ENCODE measurements at regions of chr15 and their contacts with region 1.

Region 1: DNA sequence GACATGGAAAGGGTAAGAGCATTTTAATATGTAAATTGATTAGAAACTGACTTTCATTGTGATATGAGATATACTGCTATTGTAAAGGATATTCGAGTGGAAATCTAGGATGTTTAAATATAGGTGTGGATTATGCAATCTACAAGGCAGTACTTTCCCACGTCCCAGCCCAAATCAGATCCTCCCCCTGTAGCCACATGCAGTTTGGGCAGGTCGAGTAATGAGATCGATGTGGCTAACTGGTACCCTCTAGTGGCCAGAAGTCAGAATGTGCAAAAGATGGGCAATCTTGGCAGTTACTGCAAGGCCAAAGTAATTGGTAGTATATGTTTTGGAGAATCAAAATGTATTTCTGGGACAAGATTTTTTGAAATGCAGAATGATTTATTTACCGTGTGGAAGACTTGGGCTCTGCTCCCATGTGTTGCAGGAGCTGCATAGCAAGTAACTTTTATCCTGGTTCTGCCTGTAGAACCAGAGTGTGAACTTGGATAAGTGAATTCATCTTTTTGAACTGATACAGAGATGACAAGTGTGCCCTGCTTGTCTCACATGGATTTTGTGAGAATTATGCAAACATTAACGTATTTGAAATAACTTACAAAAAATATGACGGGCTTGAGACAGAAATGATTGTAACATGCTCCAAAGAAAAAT is 94.5 kb upstream of the ADAMTSL3 start:
- DNase-seq: peak; percentile 71
- H3K4me3 ChIP-seq: no peak overlapping the region
- H3K27ac ChIP-seq: no peak overlapping the region
- H3K4me1 ChIP-seq: peaks cover 6% of the 10 kb centered on the region
- H3K27me3 ChIP-seq: no peaks in the 10 kb centered on the region
- CTCF ChIP-seq: peak; percentile 86 to 89

Region 2: DNA sequence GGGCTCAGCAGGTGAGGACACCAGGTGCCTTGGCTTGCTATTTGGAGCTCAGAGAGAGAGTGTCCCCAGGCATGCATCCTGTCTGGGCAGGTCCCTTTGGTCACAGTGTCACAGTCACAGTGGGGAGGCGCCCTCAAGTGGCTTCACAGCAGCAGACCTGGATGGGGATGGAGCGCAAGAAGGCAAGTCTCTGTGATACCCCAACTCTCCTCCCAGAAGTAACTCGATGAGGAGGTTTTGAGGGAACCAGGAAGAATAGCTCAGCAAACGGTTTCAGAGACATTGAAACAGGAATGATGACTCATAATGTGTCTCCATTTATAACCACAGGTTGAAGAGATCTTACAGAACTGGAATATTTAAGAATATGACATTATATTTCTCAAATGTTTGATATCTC is 178.8 kb before region 1 on chr15:
- CTCF ChIA-PET with region 1: no interaction called
- dilution Hi-C with region 1: no loop called
- in situ Hi-C with region 1: no loop called
- intact Hi-C with region 1: loop called (anchors 5 kb)
- DNase-seq: peak; percentile 84
- H3K4me3 ChIP-seq: no peak overlapping the region
- H3K27ac ChIP-seq: peak overlapping the region; percentile 97
- H3K4me1 ChIP-seq: peaks cover 45% of the 10 kb centered on the region
- H3K27me3 ChIP-seq: no peaks in the 10 kb centered on the region
- CTCF ChIP-seq: peak; percentile 43 to 75

Region 3: GRCh38 chr15:83436458-83437158 is 122.8 kb before region 1 on chr15:
- CTCF ChIA-PET with region 1: interaction called, 3 read pairs
- dilution Hi-C with region 1: no loop called
- in situ Hi-C with region 1: loop called (anchors 5 kb)
- intact Hi-C with region 1: loop called (anchors 1 kb)
- DNase-seq: peak; percentile 61
- H3K4me3 ChIP-seq: no peak overlapping the region
- H3K27ac ChIP-seq: no peak overlapping the region
- H3K4me1 ChIP-seq: no peaks in the 10 kb centered on the region
- H3K27me3 ChIP-seq: no peaks in the 10 kb centered on the region
- CTCF ChIP-seq: peak; percentile 64 to 70

Region 4: DNA sequence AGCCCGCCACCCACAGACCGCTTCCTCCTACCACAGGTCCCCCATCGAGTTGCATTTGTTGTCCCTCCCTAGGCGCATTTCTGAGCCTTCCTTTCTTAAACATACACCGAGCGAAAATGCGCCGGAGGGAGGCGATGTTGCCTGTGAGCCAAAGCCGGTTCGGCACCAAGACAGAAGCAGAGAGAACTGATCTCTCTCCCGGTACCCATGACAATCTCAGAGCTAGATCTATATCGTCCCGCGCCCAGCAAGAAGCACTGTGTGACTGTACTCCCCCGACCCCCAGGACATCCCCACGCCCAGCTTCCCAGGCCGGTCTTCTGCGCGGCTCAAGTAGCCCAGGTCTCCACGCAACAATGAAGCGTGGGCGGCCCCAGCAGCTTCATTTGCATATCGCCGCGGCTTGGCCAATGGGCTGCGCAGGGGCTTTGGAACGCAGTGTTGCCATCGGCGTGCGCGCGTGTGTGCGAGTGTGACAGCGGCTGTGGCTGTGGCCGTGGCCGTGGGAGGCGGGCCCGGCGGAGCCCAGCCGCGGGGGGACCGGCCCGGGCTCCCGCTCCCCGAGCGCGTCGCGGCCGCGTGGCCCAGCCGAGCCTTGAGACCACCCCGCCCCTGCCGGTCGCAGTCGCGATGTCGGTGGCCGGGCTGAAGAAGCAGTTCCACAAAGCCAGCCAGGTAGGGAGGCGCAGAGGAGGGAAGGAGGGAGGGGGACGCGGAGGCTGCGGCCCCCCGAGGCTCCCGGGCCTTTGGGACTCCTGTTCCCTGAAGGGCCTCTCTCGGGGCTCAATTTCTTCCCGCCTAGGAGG is 112.3 kb before region 1 on chr15 and contains the start of gene SH3GL3:
- CTCF ChIA-PET with region 1: no interaction called
- dilution Hi-C with region 1: no loop called
- in situ Hi-C with region 1: no loop called
- intact Hi-C with region 1: loop called (anchors 1 kb)
- DNase-seq: peak; percentile 79
- H3K4me3 ChIP-seq: peak within 1 kb of the TSS; percentile 58 to 65 (median 63)
- H3K27ac ChIP-seq: no peak within 1 kb of the TSS
- H3K4me1 ChIP-seq: peaks cover 9% of the 10 kb centered on the region
- H3K27me3 ChIP-seq: no peaks in the 10 kb centered on the region
- CTCF ChIP-seq: peak; percentile 24 to 62
- total RNA-seq, gene SH3GL3: 0.40 TPM in 1 of 2 donors, not detected in the other

Region 5: DNA sequence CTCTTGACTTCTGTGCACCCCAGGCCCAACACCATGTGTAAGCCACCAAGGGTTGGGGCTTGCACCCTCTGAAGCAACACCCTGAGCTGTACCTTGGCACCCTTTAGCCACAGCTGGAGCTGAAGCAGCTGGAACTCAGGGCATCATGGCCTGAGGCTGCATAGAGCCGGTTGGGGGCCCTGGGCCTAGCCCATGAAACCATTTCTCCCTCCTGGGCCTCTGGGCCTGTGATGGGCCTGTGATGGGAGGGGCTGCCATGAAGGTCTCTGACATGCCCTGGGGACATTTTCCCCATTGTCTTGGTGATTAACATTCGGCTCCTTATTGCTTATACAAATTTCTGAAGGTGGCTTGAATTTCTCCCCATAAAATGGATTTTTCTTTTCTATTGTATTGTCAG is 72.1 kb after region 1 on chr15:
- CTCF ChIA-PET with region 1: no interaction called
- dilution Hi-C with region 1: no loop called
- in situ Hi-C with region 1: no loop called
- intact Hi-C with region 1: no loop called
- DNase-seq: no peak
- H3K4me3 ChIP-seq: no peak overlapping the region
- H3K27ac ChIP-seq: no peak overlapping the region
- H3K4me1 ChIP-seq: no peaks in the 10 kb centered on the region
- H3K27me3 ChIP-seq: no peaks in the 10 kb centered on the region
- CTCF ChIP-seq: no peak

Region 6: DNA sequence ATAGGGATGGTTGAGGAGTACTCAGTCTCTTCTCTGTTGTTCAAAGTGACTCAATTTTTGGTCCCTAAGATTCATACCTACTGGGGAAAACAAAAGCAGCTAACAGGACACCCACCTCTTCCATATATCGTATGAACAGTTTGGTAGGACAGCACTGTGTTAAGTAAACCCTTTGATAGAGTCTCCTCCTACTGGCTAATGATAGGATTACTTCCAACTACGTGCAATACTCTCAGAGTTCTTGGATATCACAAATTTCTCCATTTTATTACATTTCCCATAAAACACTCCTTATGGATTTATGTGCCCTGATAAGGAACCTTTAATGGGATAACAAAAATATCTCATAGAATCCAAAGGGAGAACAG is 475.9 kb after region 1 on chr15:
- CTCF ChIA-PET with region 1: no interaction called
- dilution Hi-C with region 1: no loop called
- in situ Hi-C with region 1: loop called (anchors 10 kb)
- intact Hi-C with region 1: no loop called
- DNase-seq: peak; percentile 46
- H3K4me3 ChIP-seq: no peak overlapping the region
- H3K27ac ChIP-seq: no peak overlapping the region
- H3K4me1 ChIP-seq: no peaks in the 10 kb centered on the region
- H3K27me3 ChIP-seq: no peaks in the 10 kb centered on the region
- CTCF ChIP-seq: peak; percentile 74 to 75

Measured in mammary epithelial cell (primary cell).